Activated naive CD4-positive, alpha-beta T cell treated with anti-CD3 and anti-CD28 coated beads for 36 hours (primary cell): ENCODE measurements at regions of chr5 and their contacts with region 1.

Region 1: GRCh38 chr5:171342362-171343111 is 33.5 kb downstream of the TLX3 start:
- DNase-seq: peak; percentile 60
- H3K4me3 Mint-ChIP-seq: no peak overlapping the region
- H3K27ac Mint-ChIP-seq: no peak overlapping the region
- H3K4me1 Mint-ChIP-seq: no peaks in the 10 kb centered on the region
- H3K27me3 Mint-ChIP-seq: peaks cover 12% of the 10 kb centered on the region

Region 2: DNA sequence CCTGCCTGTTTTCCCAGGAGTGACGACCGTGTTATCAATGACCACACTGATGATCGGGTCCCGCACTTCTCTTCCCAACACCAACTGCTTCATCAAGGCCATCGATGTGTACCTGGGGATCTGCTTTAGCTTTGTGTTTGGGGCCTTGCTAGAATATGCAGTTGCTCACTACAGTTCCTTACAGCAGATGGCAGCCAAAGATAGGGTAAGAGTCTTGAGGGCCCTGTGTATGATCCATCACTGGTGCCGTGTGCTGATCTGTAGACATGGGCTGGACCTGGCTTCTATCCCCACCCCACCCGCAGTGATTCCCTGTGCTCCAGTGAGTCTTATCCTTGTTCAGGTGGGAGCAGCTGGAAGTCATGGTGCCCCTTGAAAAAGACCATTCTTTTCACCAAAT is 533.0 kb before region 1 on chr5:
- CTCF ChIA-PET with region 1: no interaction called
- intact Hi-C with region 1: loop called (anchors 5 kb)
- DNase-seq: no peak
- H3K4me3 Mint-ChIP-seq: no peak overlapping the region
- H3K27ac Mint-ChIP-seq: no peak overlapping the region
- H3K4me1 Mint-ChIP-seq: no peaks in the 10 kb centered on the region
- H3K27me3 Mint-ChIP-seq: peaks cover 6% of the 10 kb centered on the region

Region 3: GRCh38 chr5:170986598-170986997 is 355.9 kb before region 1 on chr5:
- CTCF ChIA-PET with region 1: no interaction called
- intact Hi-C with region 1: loop called (anchors 10 kb)
- DNase-seq: no peak
- H3K4me3 Mint-ChIP-seq: no peak overlapping the region
- H3K27ac Mint-ChIP-seq: no peak overlapping the region
- H3K4me1 Mint-ChIP-seq: no peaks in the 10 kb centered on the region
- H3K27me3 Mint-ChIP-seq: no peaks in the 10 kb centered on the region

Region 4: GRCh38 chr5:171080186-171080938 is 262.2 kb before region 1 on chr5:
- CTCF ChIA-PET with region 1: no interaction called
- intact Hi-C with region 1: no loop called
- DNase-seq: no peak
- H3K4me3 Mint-ChIP-seq: no peak overlapping the region
- H3K27ac Mint-ChIP-seq: no peak overlapping the region
- H3K4me1 Mint-ChIP-seq: no peaks in the 10 kb centered on the region
- H3K27me3 Mint-ChIP-seq: no peaks in the 10 kb centered on the region

Region 5: DNA sequence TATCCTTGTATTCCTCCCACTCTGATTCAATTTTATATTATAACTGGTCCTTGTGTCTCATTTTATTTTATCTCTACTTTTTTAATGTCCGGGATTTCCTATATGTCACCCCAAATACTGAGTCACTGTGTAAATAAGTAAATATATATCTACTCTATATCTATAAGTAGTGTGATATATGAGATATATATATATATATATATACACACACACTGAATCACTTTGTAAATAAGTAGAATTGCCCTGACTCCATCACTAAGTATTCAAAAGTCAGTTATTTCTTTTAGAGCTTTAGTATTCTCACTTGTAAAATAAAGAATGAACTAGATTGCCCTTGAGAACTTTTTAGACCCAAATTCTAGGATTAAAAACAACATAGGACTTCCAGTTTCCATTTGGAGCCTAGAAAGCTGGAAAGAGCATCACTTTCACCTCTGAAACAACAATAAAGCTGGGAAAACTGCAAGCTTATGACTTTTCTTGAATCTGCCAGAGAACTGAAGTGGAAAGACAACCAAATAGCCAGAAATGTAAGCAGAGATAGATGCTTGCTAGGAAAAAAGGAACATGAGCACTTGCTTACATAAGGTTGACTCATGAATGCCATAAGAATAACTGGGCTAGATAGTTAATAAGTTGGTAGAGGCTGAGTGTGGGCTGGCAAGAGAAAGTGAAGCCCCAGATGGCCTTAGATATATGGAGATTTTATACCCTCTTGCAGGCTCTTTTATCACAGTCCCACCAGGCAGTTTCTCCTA is 204.6 kb before region 1 on chr5:
- CTCF ChIA-PET with region 1: no interaction called
- intact Hi-C with region 1: no loop called
- DNase-seq: no peak
- H3K4me3 Mint-ChIP-seq: no peak overlapping the region
- H3K27ac Mint-ChIP-seq: no peak overlapping the region
- H3K4me1 Mint-ChIP-seq: no peaks in the 10 kb centered on the region
- H3K27me3 Mint-ChIP-seq: no peaks in the 10 kb centered on the region

Region 6: GRCh38 chr5:171207256-171207847 is 135.2 kb before region 1 on chr5:
- CTCF ChIA-PET with region 1: interaction called, 20 read pairs
- intact Hi-C with region 1: loop called (anchors 1 kb)
- DNase-seq: peak; percentile 21
- H3K4me3 Mint-ChIP-seq: no peak overlapping the region
- H3K27ac Mint-ChIP-seq: no peak overlapping the region
- H3K4me1 Mint-ChIP-seq: no peaks in the 10 kb centered on the region
- H3K27me3 Mint-ChIP-seq: peaks cover 3% of the 10 kb centered on the region

Region 7: GRCh38 chr5:171272996-171273970 is 69.3 kb before region 1 on chr5:
- CTCF ChIA-PET with region 1: interaction called, 9 read pairs
- intact Hi-C with region 1: loop called (anchors 1 kb)
- DNase-seq: peak; percentile 35
- H3K4me3 Mint-ChIP-seq: no peak overlapping the region
- H3K27ac Mint-ChIP-seq: no peak overlapping the region
- H3K4me1 Mint-ChIP-seq: no peaks in the 10 kb centered on the region
- H3K27me3 Mint-ChIP-seq: peaks cover 8% of the 10 kb centered on the region

Region 8: DNA sequence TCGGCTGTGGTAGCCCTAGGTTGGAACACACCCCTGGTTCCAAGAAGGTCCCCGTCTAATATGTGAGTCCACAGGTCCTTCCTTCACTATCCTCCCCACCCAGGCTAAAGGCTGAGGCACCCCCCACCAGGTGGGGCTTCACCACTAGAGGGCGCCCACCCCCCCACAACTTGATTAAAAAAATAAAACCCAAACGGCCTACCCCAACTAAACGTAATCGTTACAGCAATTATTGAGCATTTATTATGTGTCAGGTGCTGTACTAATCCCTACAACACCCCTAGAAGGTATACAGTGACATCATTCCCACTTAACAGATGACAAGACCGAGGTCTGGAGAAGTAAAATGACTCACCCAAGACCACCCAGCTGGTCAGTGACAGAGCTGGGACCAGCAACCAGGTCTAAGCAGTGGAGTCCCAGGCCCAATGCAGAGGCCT is 141.9 kb after region 1 on chr5:
- CTCF ChIA-PET with region 1: no interaction called
- intact Hi-C with region 1: no loop called
- DNase-seq: peak; percentile 59
- H3K4me3 Mint-ChIP-seq: no peak overlapping the region
- H3K27ac Mint-ChIP-seq: no peak overlapping the region
- H3K4me1 Mint-ChIP-seq: peaks cover 5% of the 10 kb centered on the region
- H3K27me3 Mint-ChIP-seq: peaks cover 11% of the 10 kb centered on the region